ENCODE measurements at regions of chr6 and their contacts with region 1.

Region 1: GRCh38 chr6:134063966-134064445 is 11.6 kb upstream of the SLC2A12 start:
- DNase-seq: peak; percentile 68
- H3K4me3 ChIP-seq: no peak overlapping the region
- H3K27ac ChIP-seq: no peak overlapping the region
- H3K27me3 ChIP-seq: no peaks in the 10 kb centered on the region
- CTCF ChIP-seq: peak; percentile 98

Region 2: GRCh38 chr6:133923938-133924593 is 139.9 kb before region 1 on chr6:
- CTCF ChIA-PET with region 1: interaction called, 69 read pairs
- POLR2A ChIA-PET with region 1: no interaction called
- DNase-seq: peak; percentile 59
- H3K4me3 ChIP-seq: no peak overlapping the region
- H3K27ac ChIP-seq: no peak overlapping the region
- H3K27me3 ChIP-seq: no peaks in the 10 kb centered on the region
- CTCF ChIP-seq: peak; percentile 88

Region 3: GRCh38 chr6:133959667-133960368 is 104.2 kb before region 1 on chr6:
- CTCF ChIA-PET with region 1: interaction called, 27 read pairs
- POLR2A ChIA-PET with region 1: no interaction called
- DNase-seq: no peak
- H3K4me3 ChIP-seq: no peak overlapping the region
- H3K27ac ChIP-seq: no peak overlapping the region
- H3K27me3 ChIP-seq: no peaks in the 10 kb centered on the region
- CTCF ChIP-seq: no peak

Region 4: DNA sequence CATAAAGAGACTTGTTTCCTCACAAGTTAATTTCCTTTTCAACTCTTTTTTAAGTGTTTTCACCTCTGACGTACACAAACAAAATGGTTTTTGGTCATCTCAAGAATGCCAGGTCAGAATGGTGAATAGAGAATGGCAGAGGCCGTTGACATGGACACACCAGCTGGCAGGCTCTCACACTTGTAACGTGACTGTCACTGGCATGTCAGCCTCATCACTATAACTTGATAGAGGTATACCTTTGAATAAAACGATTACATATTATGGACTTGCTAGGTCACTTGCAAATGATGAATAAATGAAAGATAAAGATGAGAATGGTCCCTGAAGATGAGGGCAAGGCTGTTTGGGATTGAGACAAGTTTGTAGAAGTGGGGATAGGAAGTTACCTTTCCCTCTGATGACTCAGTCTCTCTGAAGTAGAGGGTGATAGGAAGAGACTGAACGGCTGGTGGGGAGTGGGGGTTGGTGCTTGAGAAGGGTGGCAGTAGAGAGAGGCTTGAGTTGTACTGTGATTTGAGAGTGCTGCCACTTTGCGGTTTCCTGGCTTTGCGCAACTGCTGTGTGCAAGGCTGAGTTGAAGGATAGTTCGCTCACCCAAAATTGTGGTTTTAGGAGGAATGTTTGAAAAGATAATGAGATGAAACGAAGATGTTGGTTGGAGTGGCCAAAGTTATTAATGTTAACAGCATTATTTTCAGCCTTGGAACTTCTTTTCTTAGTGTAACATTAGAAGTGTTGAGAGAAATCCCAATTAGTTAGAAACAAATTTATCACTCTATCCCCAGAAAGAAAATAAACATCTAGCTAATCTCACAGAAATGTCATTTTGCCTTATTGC is 80.7 kb before region 1 on chr6:
- CTCF ChIA-PET with region 1: interaction called, 22 read pairs
- POLR2A ChIA-PET with region 1: interaction called, 8 read pairs
- DNase-seq: no peak
- H3K4me3 ChIP-seq: no peak overlapping the region
- H3K27ac ChIP-seq: no peak overlapping the region
- H3K27me3 ChIP-seq: no peaks in the 10 kb centered on the region
- CTCF ChIP-seq: no peak

Region 5: DNA sequence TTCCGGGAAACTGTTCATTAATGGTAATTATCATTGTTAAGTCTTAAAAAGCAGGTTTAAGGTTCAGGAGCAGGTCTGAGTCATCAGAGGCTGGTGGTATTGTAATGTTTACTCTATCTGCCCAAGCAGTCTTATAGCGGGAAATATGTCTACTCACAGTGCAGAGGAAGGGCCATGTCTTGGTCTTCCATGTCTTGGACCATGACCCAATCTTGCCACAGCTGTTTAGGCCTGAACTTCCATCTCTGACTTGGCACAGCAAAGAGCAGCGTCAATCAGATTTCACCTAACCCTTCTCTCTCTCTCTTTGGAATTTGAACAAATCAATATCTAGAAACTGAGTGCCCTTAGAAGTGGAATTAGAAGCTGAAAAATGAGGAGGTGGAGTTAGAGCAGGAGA is 37.4 kb before region 1 on chr6:
- CTCF ChIA-PET with region 1: interaction called, 26 read pairs
- POLR2A ChIA-PET with region 1: no interaction called
- DNase-seq: no peak
- H3K4me3 ChIP-seq: no peak overlapping the region
- H3K27ac ChIP-seq: no peak overlapping the region
- H3K27me3 ChIP-seq: no peaks in the 10 kb centered on the region
- CTCF ChIP-seq: no peak

Region 6: DNA sequence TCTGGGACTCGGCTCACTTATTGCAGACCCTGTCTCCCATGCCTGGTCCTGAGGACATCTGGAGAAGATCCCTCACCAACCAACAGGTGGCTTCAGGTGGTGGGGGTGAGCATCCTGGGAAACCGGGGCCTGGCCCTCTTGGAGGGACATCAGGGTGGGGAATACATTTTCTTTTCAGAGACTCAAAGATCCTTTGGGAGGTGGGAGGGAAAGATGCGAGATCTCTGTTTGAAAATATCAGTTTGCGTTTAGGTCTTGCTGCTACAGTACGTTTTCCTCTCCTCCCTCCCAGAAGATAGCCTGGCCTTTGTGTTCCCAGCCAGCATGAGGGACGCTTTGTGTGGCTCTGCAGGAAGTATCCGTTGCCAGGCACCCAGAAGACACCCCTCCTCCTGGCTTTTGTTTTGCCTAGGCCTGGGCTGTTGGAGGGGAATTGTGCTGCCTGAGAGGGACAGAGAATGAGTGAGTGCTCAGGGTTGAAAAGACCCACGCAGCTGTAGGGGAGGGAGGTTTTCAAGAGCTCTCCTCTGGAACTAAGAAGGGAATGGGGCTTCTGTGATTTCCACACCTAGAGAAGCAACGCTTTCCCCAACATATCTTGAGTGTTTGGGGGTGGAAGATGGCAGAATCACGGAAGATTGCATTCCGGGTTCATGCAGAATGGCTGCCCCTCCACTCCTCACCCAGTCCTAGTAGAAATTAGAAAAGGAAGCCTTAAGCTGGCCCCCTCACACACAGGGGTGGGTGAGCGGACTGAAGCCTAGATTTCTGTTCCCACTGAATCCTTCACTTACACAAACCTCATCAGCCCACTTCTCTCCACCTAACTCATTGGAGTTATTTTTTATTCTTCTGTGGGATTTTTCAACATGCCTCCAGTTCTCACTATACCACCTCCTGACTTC is 10.4 kb after region 1 on chr6:
- CTCF ChIA-PET with region 1: interaction called, 16 read pairs
- POLR2A ChIA-PET with region 1: no interaction called
- DNase-seq: no peak
- H3K4me3 ChIP-seq: no peak overlapping the region
- H3K27ac ChIP-seq: no peak overlapping the region
- H3K27me3 ChIP-seq: no peaks in the 10 kb centered on the region
- CTCF ChIP-seq: no peak

Region 7: DNA sequence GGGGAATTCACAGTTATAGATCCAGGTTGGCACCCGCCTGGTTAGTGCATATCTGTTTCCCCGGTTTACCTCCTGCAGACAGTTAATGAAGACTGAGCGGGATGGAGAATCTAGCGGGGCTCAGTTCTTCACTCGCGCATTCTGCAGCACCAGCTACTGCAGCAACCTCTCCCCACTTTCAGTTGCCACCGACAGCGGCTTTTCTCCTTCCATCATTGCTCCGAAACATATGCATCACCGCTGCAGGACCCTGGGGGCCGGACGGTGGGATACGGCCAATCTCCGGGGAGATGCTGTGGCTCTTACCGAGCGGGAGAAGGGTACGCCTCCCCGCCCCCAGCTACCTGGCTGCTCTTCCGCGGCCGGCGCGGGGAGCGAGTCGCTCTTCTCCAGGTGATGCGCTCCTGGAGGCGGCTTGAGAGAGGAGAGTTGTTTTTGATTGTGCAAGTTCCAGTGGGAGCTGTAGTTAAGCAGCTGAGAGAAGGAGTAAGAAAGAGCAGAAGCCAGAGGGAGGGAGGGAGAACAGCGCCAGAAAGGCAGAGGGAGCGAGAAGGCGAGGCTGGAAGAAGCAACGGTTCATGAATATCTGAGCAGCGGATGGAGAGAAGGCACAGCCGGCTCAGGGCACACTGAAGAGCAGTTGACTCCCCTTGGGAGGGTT is 253.6 kb after region 1 on chr6 and contains the start of gene SGK1:
- CTCF ChIA-PET with region 1: no interaction called
- POLR2A ChIA-PET with region 1: no interaction called
- DNase-seq: no peak
- H3K4me3 ChIP-seq: peak within 1 kb of the TSS; percentile 72
- H3K27ac ChIP-seq: no peak within 1 kb of the TSS
- H3K27me3 ChIP-seq: no peaks in the 10 kb centered on the region
- CTCF ChIP-seq: peak; percentile 21; the same call in 1 of the 2 replicates
- polyA plus RNA-seq, gene SGK1: 115 and 120 TPM in 2 replicates

Measured in AG04450 (cell line).